ENCODE measurements at regions of chr10 and their contacts with region 1.

Region 1: DNA sequence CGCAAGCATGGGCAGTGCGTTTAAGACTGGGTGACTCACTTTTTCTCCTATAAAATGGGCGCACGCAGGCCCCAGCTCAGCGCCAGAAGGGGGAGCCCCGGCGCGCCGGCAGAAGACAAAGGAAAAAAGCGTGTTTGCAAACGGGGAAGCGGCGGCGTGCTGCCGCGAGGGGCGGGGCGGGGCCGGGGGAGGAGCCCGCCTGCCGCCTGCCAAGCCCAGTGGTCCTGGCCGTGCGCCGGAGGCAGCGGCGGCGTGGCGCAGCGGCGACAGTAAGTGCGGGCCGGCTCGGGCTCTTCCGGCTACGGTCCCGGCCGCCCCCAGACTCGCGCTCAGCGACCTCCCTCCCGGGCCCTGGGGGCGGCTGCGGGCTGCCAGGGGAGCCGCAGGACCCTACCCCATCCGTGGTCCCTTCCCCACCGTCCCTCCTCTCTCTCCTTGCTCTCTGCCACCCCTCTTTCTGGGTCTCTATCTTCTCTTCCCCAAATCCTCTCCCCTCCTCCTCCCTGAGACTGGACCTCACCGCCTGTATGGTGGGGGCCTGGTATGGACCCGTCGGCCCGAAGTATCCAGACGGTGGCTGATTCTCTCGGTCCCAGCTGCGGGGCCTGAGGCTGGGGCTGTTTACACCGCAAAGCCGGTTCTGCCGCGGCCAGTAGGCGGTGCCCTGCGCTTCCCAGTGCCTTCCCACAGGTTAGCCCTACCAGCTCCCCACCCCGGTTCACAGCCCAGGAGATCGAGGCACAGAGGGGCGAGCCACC is at the start of gene SLC29A3:
- DNase-seq: no peak
- H3K4me3 ChIP-seq: peak within 1 kb of the TSS; percentile 71 to 93 (median 84)
- H3K27ac ChIP-seq: peak within 1 kb of the TSS; percentile 81 to 87 (median 85)
- H3K4me1 ChIP-seq: peaks cover 14 to 29% (median 23%) of the 10 kb centered on the region in 4 donors
- H3K27me3 ChIP-seq: no peaks in the 10 kb centered on the region
- CTCF ChIP-seq: peak; percentile 53 to 70 (median 67)
- EP300 ChIP-seq: no peak
- POLR2A ChIP-seq: no peak
- total RNA-seq, gene SLC29A3: 4.0 to 6.9 (median 5.0) TPM

Region 2: DNA sequence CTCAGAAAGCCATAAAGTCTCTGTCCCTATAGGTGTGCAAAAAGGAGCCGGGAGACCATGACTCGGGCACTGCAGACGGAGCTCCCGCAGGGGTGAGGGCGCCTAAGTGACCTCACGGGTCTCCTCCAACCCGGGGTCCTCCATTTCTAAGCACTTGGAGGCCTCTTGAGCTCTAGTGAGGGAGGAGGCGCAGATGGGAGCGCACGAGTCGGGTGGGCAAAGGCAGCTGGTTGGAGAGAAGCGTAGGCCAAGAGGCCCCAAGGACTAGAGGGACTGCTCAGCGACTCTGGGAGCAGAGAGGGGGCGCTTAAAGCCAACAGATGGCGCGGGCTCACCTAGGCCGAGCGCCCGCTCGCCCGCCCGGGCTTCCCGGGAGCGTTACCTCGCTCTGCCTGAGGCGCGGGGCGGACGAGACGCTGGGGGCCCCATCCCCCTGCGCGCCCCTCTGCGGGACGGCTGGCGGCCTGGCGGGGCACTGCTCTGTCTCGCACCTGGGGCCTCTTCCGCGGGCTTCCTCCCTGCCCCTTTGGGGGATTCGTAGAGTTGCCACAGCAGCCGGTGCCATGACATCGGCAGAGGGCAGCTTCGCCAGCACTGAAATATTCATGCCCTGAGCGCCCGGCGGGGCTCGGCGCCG is 77.0 kb after region 1 on chr10:
- intact Hi-C with region 1: loop called (anchors 5 kb)
- DNase-seq: no peak
- H3K4me3 ChIP-seq: peak overlapping the region; percentile 70 to 85 (median 74)
- H3K27ac ChIP-seq: peak overlapping the region; percentile 77 to 86 (median 79)
- H3K4me1 ChIP-seq: peaks cover 20 to 32% (median 26%) of the 10 kb centered on the region in 4 donors
- H3K27me3 ChIP-seq: peaks cover 0 to 34% (median 0%) of the 10 kb centered on the region in 4 donors
- CTCF ChIP-seq: peak; percentile 75 to 82 (median 82)
- EP300 ChIP-seq: no peak
- POLR2A ChIP-seq: no peak

Region 3: GRCh38 chr10:71708301-71708703 is 389.1 kb after region 1 on chr10:
- intact Hi-C with region 1: loop called (anchors 5 kb)
- DNase-seq: no peak
- H3K4me3 ChIP-seq: no peak overlapping the region
- H3K27ac ChIP-seq: no peak overlapping the region
- H3K4me1 ChIP-seq: peaks cover 13 to 28% (median 21%) of the 10 kb centered on the region in 4 donors
- H3K27me3 ChIP-seq: no peaks in the 10 kb centered on the region
- CTCF ChIP-seq: peak; percentile 79 to 93 (median 90)
- EP300 ChIP-seq: no peak
- POLR2A ChIP-seq: no peak

Region 4: GRCh38 chr10:71812016-71812912 is 493.0 kb after region 1 on chr10:
- intact Hi-C with region 1: loop called (anchors 10 kb)
- DNase-seq: no peak
- H3K4me3 ChIP-seq: no peak overlapping the region
- H3K27ac ChIP-seq: no peak overlapping the region
- H3K4me1 ChIP-seq: peaks cover 21 to 41% (median 31%) of the 10 kb centered on the region in 4 donors
- H3K27me3 ChIP-seq: no peaks in the 10 kb centered on the region
- CTCF ChIP-seq: peak; percentile 73 to 95 (median 85)
- EP300 ChIP-seq: no peak
- POLR2A ChIP-seq: no peak